CD8-positive, alpha-beta T cell (primary cell): ENCODE measurements at regions of chr1 and their contacts with region 1.

Region 1: GRCh38 chr1:101112051-101112780 is 86.6 kb upstream of the DPH5 start:
- DNase-seq: peak; percentile 53 to 96 (median 73)
- ATAC-seq: peak; percentile 89
- H3K4me3 ChIP-seq: peak overlapping the region in 1 of 2 experiments; percentile 23
- H3K4me3 Mint-ChIP-seq: peak overlapping the region; percentile 66
- H3K27ac ChIP-seq: peak overlapping the region; percentile 84 to 93
- H3K27ac Mint-ChIP-seq: peak overlapping the region; percentile 99
- H3K4me1 ChIP-seq: peaks cover 42% of the 10 kb centered on the region
- H3K4me1 Mint-ChIP-seq: peaks cover 64% of the 10 kb centered on the region
- H3K27me3 ChIP-seq: no peaks in the 10 kb centered on the region
- H3K27me3 Mint-ChIP-seq: no peaks in the 10 kb centered on the region
- CTCF ChIP-seq: no peak

Region 2: DNA sequence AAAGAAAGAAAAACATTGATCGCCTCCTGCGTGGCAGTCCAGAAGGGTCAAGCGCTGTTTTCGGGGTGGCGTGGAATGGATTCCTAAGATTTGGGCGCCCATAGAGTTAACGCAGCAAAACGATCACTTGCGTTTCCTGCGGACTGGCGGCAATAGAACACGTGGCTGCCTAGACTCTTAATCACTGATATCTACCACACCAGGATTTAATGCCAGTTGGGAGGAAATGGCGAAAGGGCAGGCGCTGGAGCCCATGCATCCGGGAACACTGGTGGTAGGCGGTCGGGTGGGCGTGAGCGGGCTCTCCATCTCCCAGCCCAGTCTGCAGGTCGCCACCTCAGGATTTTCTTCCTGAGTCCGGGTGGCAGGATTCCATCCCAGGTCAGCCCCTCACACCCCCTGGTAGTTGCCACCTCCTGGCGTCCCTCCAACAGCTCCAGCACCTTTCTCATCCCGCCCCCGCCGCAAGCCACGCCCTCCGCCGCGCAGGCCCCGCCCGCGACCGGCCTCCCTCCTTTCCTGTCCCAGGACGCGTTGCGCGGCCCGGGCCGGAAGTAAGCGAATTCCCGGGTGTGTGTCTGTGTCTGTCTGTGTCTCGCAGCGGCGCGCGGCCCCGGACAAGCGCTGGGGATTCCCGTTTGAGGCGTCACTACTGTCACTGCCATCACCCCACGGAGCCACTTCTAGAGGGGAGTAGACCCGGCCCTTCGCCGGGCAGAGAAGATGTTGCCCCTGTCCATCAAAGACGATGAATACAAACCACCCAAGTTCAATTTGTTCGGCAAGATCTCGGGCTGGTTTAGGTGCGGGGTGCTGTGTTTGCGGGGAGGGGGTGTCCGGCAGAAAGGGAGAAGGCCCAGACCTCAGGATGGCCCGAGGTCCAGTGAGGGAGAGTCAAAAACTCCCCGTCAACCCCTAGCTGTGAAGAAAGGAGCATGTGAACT is 216.4 kb before region 1 on chr1 and contains the start of gene SLC30A7:
- CTCF ChIA-PET with region 1: no interaction called
- POLR2A ChIA-PET with region 1: no interaction called
- intact Hi-C with region 1: loop called in 1 of 2 experiments (anchors 5 kb)
- DNase-seq: peak; percentile 91 to 98 (median 96)
- ATAC-seq: peak; percentile 72
- H3K4me3 ChIP-seq: peak within 1 kb of the TSS; percentile 92 to 98
- H3K4me3 Mint-ChIP-seq: peak within 1 kb of the TSS; percentile 100
- H3K27ac ChIP-seq: peak within 1 kb of the TSS; percentile 85 to 99
- H3K27ac Mint-ChIP-seq: peak within 1 kb of the TSS; percentile 100
- H3K4me1 ChIP-seq: peaks cover 20% of the 10 kb centered on the region
- H3K4me1 Mint-ChIP-seq: peaks cover 49% of the 10 kb centered on the region
- H3K27me3 ChIP-seq: no peaks in the 10 kb centered on the region
- H3K27me3 Mint-ChIP-seq: no peaks in the 10 kb centered on the region
- CTCF ChIP-seq: no peak
- total RNA-seq, gene SLC30A7: 18.8 to 20.2 TPM

Region 3: GRCh38 chr1:101025657-101026504 is 86.3 kb before region 1 on chr1 and contains the start of gene DPH5:
- CTCF ChIA-PET with region 1: interaction called, 4 read pairs
- POLR2A ChIA-PET with region 1: no interaction called
- intact Hi-C with region 1: loop called (anchors 2 kb)
- DNase-seq: peak; percentile 73 to 91 (median 88)
- ATAC-seq: peak; percentile 95
- H3K4me3 ChIP-seq: peak within 1 kb of the TSS; percentile 75 to 96
- H3K4me3 Mint-ChIP-seq: peak within 1 kb of the TSS; percentile 90
- H3K27ac ChIP-seq: peak within 1 kb of the TSS; percentile 71 to 77
- H3K27ac Mint-ChIP-seq: peak within 1 kb of the TSS; percentile 98
- H3K4me1 ChIP-seq: peaks cover 52% of the 10 kb centered on the region
- H3K4me1 Mint-ChIP-seq: peaks cover 83% of the 10 kb centered on the region
- H3K27me3 ChIP-seq: no peaks in the 10 kb centered on the region
- H3K27me3 Mint-ChIP-seq: no peaks in the 10 kb centered on the region
- CTCF ChIP-seq: no peak
- total RNA-seq, gene DPH5: 32.1 to 40.7 TPM

Region 4: GRCh38 chr1:101081496-101082488 is 30.4 kb before region 1 on chr1:
- CTCF ChIA-PET with region 1: interaction called, 3 read pairs
- POLR2A ChIA-PET with region 1: interaction called, 3 read pairs
- intact Hi-C with region 1: loop called in 1 of 2 experiments (anchors 2 kb)
- DNase-seq: peak in 8 of 9 experiments; percentile 5 to 75 (median 34)
- ATAC-seq: peak; percentile 93
- H3K4me3 ChIP-seq: no peak overlapping the region
- H3K4me3 Mint-ChIP-seq: peak overlapping the region; percentile 56
- H3K27ac ChIP-seq: peak overlapping the region; percentile 14 to 36
- H3K27ac Mint-ChIP-seq: peak overlapping the region; percentile 85
- H3K4me1 ChIP-seq: peaks cover 35% of the 10 kb centered on the region
- H3K4me1 Mint-ChIP-seq: peaks cover 48% of the 10 kb centered on the region
- H3K27me3 ChIP-seq: no peaks in the 10 kb centered on the region
- H3K27me3 Mint-ChIP-seq: no peaks in the 10 kb centered on the region
- CTCF ChIP-seq: no peak

Region 5: DNA sequence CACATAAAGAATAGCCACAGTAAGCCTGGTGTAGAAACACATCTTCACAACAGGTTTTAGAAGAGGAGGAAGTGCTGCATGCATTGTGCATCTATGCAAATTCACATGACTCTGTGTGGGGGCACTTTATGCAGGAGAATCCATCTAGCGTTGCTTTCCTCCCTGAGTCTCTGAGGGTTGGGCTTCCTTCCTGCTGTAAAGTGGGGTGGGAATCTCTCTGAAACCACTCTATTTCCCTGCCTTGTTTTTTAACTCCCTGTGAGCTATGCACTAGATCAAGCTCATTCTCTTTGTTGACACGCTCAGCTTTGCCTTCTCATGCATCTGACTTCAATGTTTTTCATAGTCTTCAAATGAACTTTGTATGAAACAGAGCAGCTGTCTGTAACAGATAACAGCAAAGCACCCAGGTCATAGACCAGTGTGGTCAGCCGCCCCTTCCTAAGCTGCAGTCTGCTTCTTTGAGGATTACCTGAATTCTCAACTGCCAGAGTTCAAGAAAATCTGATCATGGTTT is 16.1 kb after region 1 on chr1:
- CTCF ChIA-PET with region 1: interaction called, 4 read pairs
- POLR2A ChIA-PET with region 1: interaction called, 7 read pairs
- intact Hi-C with region 1: loop called (anchors 2 kb)
- DNase-seq: peak in 7 of 9 experiments; percentile 17 to 71 (median 46)
- ATAC-seq: peak; percentile 75
- H3K4me3 ChIP-seq: peak overlapping the region; percentile 1 to 7
- H3K4me3 Mint-ChIP-seq: peak overlapping the region; percentile 53
- H3K27ac ChIP-seq: peak overlapping the region; percentile 20 to 64
- H3K27ac Mint-ChIP-seq: peak overlapping the region; percentile 90
- H3K4me1 ChIP-seq: peaks cover 53% of the 10 kb centered on the region
- H3K4me1 Mint-ChIP-seq: peaks cover 69% of the 10 kb centered on the region
- H3K27me3 ChIP-seq: no peaks in the 10 kb centered on the region
- H3K27me3 Mint-ChIP-seq: no peaks in the 10 kb centered on the region
- CTCF ChIP-seq: no peak